ENCODE measurements at regions of chr9 and their contacts with region 1.

Region 1: DNA sequence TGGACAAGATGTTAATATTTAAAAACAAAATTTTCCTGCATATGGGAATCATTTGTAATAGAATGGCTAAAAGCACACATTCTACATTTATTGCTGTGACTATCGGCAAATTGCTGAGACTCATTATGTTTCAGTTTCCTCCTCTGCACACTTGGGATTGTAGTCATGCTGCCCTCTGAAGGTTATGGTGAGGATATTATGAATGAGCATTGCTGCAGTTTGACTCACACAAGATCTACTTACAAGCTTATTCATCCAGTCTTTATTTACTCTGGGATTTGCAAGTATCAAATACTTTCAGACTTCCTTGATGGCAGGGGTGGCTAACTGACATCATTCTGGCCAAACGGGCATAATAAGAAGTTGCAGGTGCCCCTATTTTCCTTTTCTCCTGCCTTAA is 9.5 kb upstream of the NFIL3 start:
- DNase-seq: peak in 1 of 2 experiments; percentile 22
- H3K4me3 ChIP-seq: no peak overlapping the region
- H3K4me3 Mint-ChIP-seq: no peak overlapping the region
- H3K27ac Mint-ChIP-seq: no peak overlapping the region
- H3K4me1 ChIP-seq: no peaks in the 10 kb centered on the region
- H3K4me1 Mint-ChIP-seq: no peaks in the 10 kb centered on the region
- H3K27me3 ChIP-seq: no peaks in the 10 kb centered on the region
- H3K27me3 Mint-ChIP-seq: peaks cover 4% of the 10 kb centered on the region
- CTCF ChIP-seq: peak; percentile 5 to 32

Region 2: GRCh38 chr9:91411096-91411771 is 21.9 kb before region 1 on chr9:
- CTCF ChIA-PET with region 1: no interaction called
- POLR2A ChIA-PET with region 1: no interaction called
- intact Hi-C with region 1: loop called (anchors 2 kb)
- DNase-seq: no peak
- H3K4me3 ChIP-seq: no peak overlapping the region
- H3K4me3 Mint-ChIP-seq: no peak overlapping the region
- H3K27ac Mint-ChIP-seq: no peak overlapping the region
- H3K4me1 ChIP-seq: peaks cover 8% of the 10 kb centered on the region
- H3K4me1 Mint-ChIP-seq: no peaks in the 10 kb centered on the region
- H3K27me3 ChIP-seq: no peaks in the 10 kb centered on the region
- H3K27me3 Mint-ChIP-seq: no peaks in the 10 kb centered on the region
- CTCF ChIP-seq: no peak

Region 3: DNA sequence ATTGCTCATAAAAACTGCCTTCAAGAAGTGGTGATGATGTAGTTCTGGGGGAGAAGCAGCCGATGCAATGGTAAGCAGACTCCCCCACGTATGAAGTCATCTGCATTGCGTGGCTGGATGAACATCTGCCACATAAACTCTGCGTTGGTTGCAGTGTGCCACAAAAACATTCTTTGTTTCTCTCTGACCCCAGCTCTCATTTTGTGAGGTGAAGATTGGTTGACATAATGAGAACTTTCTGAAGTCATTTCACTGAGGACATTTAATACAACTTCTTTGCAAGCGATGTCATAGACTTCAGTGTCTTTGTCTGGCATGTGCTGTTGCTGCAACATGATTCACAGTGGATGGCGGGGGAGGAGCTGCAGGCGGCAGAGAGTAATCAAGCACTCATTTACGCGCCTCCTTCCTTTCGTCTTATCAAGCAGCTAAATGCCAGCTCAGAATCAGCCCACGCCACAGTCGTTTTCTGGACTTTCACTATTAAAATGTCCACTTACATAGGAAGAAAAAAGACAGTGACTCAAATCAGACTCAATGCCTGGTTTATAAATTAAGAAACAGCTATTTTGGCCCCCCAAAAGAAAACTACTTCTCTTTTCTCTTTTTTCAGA is 82.0 kb after region 1 on chr9:
- CTCF ChIA-PET with region 1: no interaction called
- POLR2A ChIA-PET with region 1: no interaction called
- intact Hi-C with region 1: no loop called
- DNase-seq: no peak
- H3K4me3 ChIP-seq: no peak overlapping the region
- H3K4me3 Mint-ChIP-seq: no peak overlapping the region
- H3K27ac Mint-ChIP-seq: no peak overlapping the region
- H3K4me1 ChIP-seq: no peaks in the 10 kb centered on the region
- H3K4me1 Mint-ChIP-seq: no peaks in the 10 kb centered on the region
- H3K27me3 ChIP-seq: no peaks in the 10 kb centered on the region
- H3K27me3 Mint-ChIP-seq: no peaks in the 10 kb centered on the region
- CTCF ChIP-seq: no peak

Region 4: DNA sequence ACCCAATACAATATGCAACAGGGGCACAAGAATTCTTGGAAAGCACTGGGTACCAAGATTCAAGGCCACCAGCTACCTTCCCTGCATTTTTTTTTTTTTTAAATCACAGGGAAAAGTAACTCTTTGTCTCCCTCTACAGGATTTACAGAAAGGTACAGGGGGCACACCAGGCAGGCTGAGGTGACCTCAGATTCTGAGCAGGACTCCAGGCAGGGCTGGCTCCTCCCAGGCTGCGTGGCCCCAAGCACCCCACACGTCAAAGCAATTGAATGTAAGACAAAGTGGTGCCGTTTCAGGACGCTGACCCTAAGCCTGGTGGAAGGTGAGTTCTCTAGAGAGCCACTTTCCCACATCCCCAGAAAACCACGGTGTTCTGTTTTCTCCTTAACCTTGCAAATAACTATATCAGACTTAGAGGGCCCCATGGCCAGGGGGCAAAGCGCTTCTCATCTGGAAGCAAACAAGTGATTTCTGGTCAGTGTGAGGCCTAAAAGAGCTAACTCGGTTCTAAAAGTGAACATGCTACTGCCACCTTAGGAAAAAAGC is 294.2 kb after region 1 on chr9:
- CTCF ChIA-PET with region 1: interaction called, 6 read pairs
- POLR2A ChIA-PET with region 1: no interaction called
- intact Hi-C with region 1: loop called (anchors 5 kb)
- DNase-seq: peak; percentile 47 to 55
- H3K4me3 ChIP-seq: no peak overlapping the region
- H3K4me3 Mint-ChIP-seq: no peak overlapping the region
- H3K27ac Mint-ChIP-seq: no peak overlapping the region
- H3K4me1 ChIP-seq: no peaks in the 10 kb centered on the region
- H3K4me1 Mint-ChIP-seq: no peaks in the 10 kb centered on the region
- H3K27me3 ChIP-seq: no peaks in the 10 kb centered on the region
- H3K27me3 Mint-ChIP-seq: no peaks in the 10 kb centered on the region
- CTCF ChIP-seq: peak; percentile 17 to 53